ENCODE measurements at regions of chr2 and their contacts with region 1.

Region 1: GRCh38 chr2:116477229-116477628 is 1337.3 kb upstream of the DDX18 start:
- DNase-seq: no peak
- ATAC-seq: no peak
- H3K4me3 ChIP-seq: no peak overlapping the region
- H3K4me3 Mint-ChIP-seq: no peak overlapping the region
- H3K27ac ChIP-seq: no peak overlapping the region
- H3K27ac Mint-ChIP-seq: no peak overlapping the region
- H3K4me1 ChIP-seq: no peaks in the 10 kb centered on the region
- H3K4me1 Mint-ChIP-seq: peaks cover 0 to 1% (median 0%) of the 10 kb centered on the region in 7 donors
- H3K27me3 ChIP-seq: no peaks in the 10 kb centered on the region
- H3K27me3 Mint-ChIP-seq: no peaks in the 10 kb centered on the region

Region 2: GRCh38 chr2:116074161-116074560 is 403.1 kb before region 1 on chr2:
- CTCF ChIA-PET with region 1: no interaction called
- POLR2A ChIA-PET with region 1: no interaction called
- intact Hi-C with region 1: no loop called
- DNase-seq: no peak
- ATAC-seq: no peak
- H3K4me3 ChIP-seq: no peak overlapping the region
- H3K4me3 Mint-ChIP-seq: no peak overlapping the region
- H3K27ac ChIP-seq: no peak overlapping the region
- H3K27ac Mint-ChIP-seq: no peak overlapping the region
- H3K4me1 ChIP-seq: no peaks in the 10 kb centered on the region
- H3K4me1 Mint-ChIP-seq: no peaks in the 10 kb centered on the region
- H3K27me3 ChIP-seq: no peaks in the 10 kb centered on the region
- H3K27me3 Mint-ChIP-seq: no peaks in the 10 kb centered on the region

Region 3: DNA sequence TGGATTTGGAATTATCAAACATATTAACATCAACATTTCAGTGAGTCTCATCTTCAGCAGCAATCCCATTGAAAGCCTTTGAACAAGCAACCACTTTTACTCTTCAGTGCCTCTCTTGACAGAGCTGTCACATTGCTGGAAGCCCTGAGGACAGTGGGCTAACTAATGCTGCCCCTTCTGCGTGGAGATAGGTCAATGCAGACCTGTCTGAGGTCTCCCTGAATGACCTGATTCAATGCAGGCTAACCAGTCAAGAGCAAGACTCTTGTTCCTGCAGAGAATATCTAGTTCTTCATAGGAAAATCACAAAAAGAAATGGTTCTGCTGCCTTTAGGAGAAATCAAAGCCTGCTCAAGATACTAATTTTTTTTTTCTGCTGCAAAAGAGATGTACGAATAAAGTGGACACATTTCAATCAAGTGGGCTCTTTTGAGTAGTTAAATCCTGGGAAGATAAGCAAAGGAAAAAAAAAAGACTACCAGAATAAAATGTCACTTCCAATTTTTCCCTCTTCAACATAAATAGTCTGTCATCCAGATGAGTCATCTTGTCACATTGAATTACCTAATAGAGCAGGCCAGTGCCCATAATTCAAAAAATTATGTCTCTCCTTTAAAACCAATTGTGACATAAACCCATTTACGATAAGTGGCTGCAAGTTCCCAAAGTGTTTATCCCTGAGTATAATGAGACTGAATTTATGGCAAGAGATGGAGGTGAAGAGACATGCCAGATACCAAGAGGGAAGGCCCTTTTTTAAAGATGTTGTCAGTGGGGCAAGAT is 68.2 kb after region 1 on chr2:
- CTCF ChIA-PET with region 1: no interaction called
- POLR2A ChIA-PET with region 1: no interaction called
- intact Hi-C with region 1: loop called in 1 of 2 experiments (anchors 2 kb)
- DNase-seq: no peak
- ATAC-seq: no peak
- H3K4me3 ChIP-seq: no peak overlapping the region
- H3K4me3 Mint-ChIP-seq: no peak overlapping the region
- H3K27ac ChIP-seq: no peak overlapping the region
- H3K27ac Mint-ChIP-seq: no peak overlapping the region
- H3K4me1 ChIP-seq: no peaks in the 10 kb centered on the region
- H3K4me1 Mint-ChIP-seq: no peaks in the 10 kb centered on the region
- H3K27me3 ChIP-seq: no peaks in the 10 kb centered on the region
- H3K27me3 Mint-ChIP-seq: no peaks in the 10 kb centered on the region